CD14-positive monocyte (primary cell): ENCODE measurements at regions of chr6 and their contacts with region 1.

Region 1: DNA sequence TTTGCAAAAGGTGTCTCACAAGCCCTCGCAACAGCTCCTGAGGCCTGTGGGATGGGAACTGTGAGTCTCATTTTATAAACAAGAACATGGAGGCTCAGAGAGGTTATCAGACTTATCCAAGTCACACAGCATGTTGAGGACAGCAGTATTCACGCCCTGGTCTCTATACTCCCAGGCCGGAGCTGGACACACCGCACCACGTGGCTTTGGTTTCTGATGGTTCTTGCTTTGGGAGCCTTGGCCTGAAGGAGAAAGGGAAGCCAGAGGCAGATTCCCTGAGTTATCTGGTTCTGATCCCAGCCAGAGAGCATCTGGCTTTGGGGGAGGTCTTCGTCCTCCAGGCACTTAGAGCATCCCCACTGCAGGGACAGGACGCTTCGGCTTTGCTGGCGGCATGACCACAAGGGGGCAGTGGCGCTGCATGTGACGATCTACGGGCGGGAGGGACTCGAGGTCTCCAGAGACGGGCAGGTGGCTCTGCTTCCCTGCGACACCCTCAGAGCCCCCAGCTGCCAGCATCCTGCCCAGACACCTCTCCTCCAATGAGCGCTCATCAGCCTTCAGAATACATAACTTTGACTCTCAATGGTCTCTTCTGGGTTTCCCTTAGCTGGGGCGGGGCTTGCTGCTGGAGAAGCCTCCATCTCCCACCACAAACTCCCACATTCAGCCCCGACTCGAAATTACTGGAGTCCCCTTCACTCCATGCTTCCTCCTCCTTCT is 51.4 kb upstream of the SAYSD1 start:
- DNase-seq: peak; percentile 57 to 76 (median 62)
- H3K4me3 ChIP-seq: no peak overlapping the region
- H3K4me3 Mint-ChIP-seq: no peak overlapping the region
- H3K27ac ChIP-seq: no peak overlapping the region
- H3K27ac Mint-ChIP-seq: no peak overlapping the region
- H3K4me1 ChIP-seq: peaks cover 4 to 5% of the 10 kb centered on the region in 2 donors
- H3K4me1 Mint-ChIP-seq: peaks cover 11% of the 10 kb centered on the region
- H3K27me3 ChIP-seq: no peaks in the 10 kb centered on the region
- H3K27me3 Mint-ChIP-seq: peaks cover 0 to 8% (median 1%) of the 10 kb centered on the region in 3 donors
- CTCF ChIP-seq: peak; percentile 99

Region 2: DNA sequence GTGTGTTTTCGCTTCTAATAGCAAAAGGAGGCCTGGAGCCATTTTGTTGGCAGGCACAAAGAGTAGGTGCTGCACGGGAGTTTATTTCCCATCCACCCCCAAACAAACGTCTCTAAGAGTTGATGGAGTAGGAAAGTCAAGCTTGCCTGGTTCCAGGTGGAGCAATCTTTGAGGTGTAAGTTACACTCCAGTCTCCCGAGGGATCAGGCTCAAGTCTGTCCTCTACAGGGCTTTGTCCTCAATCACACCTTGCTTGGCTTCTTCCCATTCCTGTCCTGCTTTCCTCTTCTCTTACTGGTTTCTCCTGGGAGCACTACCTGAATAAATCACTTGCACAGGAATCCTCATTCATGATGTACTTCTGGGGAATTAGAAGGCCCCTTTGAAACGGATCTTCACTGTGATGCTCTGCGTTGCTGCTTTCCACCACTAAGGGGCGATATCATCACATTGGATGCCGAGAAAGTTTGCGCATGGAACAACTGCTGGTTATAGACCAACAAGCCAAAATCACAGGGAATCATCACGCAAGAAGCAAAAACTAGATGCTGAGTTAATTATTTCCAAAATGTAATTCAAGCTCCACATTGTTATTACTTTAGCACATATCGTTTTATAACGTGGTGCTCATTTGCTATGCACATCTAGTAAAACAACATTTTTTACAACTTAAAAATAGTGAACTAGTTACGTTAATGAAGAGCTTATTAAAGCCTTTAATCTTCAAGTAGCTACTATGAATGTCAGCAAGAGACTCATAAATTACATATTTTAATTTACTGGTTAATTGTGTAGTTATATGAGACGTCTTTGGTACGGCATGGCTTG is 294.4 kb before region 1 on chr6:
- intact Hi-C with region 1: loop called in 1 of 2 experiments (anchors 10 kb)
- DNase-seq: peak in 2 of 3 donors; percentile 6 to 13
- H3K4me3 ChIP-seq: no peak overlapping the region
- H3K4me3 Mint-ChIP-seq: no peak overlapping the region
- H3K27ac ChIP-seq: no peak overlapping the region
- H3K27ac Mint-ChIP-seq: no peak overlapping the region
- H3K4me1 ChIP-seq: peaks cover 9 to 11% of the 10 kb centered on the region in 2 donors
- H3K4me1 Mint-ChIP-seq: peaks cover 11% of the 10 kb centered on the region
- H3K27me3 ChIP-seq: peaks cover 0 to 2% of the 10 kb centered on the region in 2 donors
- H3K27me3 Mint-ChIP-seq: peaks cover 3 to 12% (median 6%) of the 10 kb centered on the region in 3 donors
- CTCF ChIP-seq: peak; percentile 89

Region 3: GRCh38 chr6:39239527-39240154 is 73.3 kb after region 1 on chr6:
- intact Hi-C with region 1: no loop called
- DNase-seq: no peak
- H3K4me3 ChIP-seq: no peak overlapping the region
- H3K4me3 Mint-ChIP-seq: no peak overlapping the region
- H3K27ac ChIP-seq: no peak overlapping the region
- H3K27ac Mint-ChIP-seq: no peak overlapping the region
- H3K4me1 ChIP-seq: no peaks in the 10 kb centered on the region
- H3K4me1 Mint-ChIP-seq: no peaks in the 10 kb centered on the region
- H3K27me3 ChIP-seq: no peaks in the 10 kb centered on the region
- H3K27me3 Mint-ChIP-seq: peaks cover under 1 to 2% (median 1%) of the 10 kb centered on the region in 3 donors
- CTCF ChIP-seq: no peak

Region 4: GRCh38 chr6:39302669-39303424 is 136.5 kb after region 1 on chr6:
- intact Hi-C with region 1: loop called (anchors 1 kb)
- DNase-seq: peak; percentile 70 to 80 (median 80)
- H3K4me3 ChIP-seq: peak overlapping the region in 1 of 3 experiments; percentile 61
- H3K4me3 Mint-ChIP-seq: peak overlapping the region; percentile 67 to 89
- H3K27ac ChIP-seq: no peak overlapping the region
- H3K27ac Mint-ChIP-seq: peak overlapping the region in 4 of 7 donors; percentile 3 to 82 (median 36)
- H3K4me1 ChIP-seq: peaks cover 7 to 13% of the 10 kb centered on the region in 2 donors
- H3K4me1 Mint-ChIP-seq: peaks cover 15% of the 10 kb centered on the region
- H3K27me3 ChIP-seq: no peaks in the 10 kb centered on the region
- H3K27me3 Mint-ChIP-seq: peaks cover 4 to 8% (median 5%) of the 10 kb centered on the region in 3 donors
- CTCF ChIP-seq: peak; percentile 95